GM18951 (cell line): ENCODE measurements at regions of chr11 and their contacts with region 1.

Region 1: GRCh38 chr11:36292311-36292722 is 3.1 kb upstream of the COMMD9 start:
- POLR2A ChIP-seq: no peak

Region 2: GRCh38 chr11:36492724-36493304 is 200.5 kb after region 1 on chr11:
- in situ Hi-C with region 1: loop called (anchors 10 kb)
- POLR2A ChIP-seq: no peak

Region 3: GRCh38 chr11:36564376-36565030 is 272.2 kb after region 1 on chr11:
- in situ Hi-C with region 1: no loop called
- POLR2A ChIP-seq: no peak